ENCODE measurements at regions of chr7 and their contacts with region 1.

Region 1: DNA sequence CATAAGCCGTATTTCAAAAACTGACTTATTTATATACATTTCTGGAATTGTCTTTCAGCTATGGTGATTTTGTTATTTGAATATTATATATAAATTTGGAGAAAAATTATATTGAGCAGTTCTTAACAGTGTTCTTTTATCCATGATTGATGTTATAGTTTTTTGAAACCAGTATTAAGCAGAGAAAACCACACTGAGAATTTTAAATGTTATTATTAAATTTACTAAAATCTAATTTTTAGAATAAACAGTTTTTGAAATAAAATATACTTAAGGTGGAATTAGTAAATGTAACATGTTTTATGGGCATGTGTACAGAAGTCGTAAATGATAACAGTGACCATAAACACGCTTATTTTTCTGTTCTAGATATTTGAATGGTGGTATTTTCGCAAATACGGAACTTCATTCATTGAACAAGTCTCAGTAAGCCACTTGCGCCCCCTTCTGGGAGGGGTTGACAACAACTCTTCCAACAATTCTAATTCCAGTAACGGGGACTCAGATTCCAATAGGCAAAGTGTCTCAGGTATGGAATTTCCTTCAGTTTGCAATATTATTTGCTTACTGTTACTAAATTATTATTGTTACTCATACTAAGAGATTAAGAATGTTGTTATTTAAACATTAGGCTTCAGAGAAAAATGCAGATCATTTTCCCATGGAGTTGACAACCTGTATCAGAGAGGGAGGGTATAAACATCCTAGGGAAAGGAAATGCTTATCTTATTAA is 166.1 kb downstream of the ST7 start:
- DNase-seq: peak; percentile 69
- ATAC-seq: peak; percentile 76
- H3K4me3 ChIP-seq: no peak overlapping the region
- H3K27ac ChIP-seq: no peak overlapping the region
- H3K4me1 ChIP-seq: peaks cover 17% of the 10 kb centered on the region
- H3K27me3 ChIP-seq: no peaks in the 10 kb centered on the region
- CTCF ChIP-seq: peak; percentile 83; the same call in 1 of the 2 replicates

Region 2: DNA sequence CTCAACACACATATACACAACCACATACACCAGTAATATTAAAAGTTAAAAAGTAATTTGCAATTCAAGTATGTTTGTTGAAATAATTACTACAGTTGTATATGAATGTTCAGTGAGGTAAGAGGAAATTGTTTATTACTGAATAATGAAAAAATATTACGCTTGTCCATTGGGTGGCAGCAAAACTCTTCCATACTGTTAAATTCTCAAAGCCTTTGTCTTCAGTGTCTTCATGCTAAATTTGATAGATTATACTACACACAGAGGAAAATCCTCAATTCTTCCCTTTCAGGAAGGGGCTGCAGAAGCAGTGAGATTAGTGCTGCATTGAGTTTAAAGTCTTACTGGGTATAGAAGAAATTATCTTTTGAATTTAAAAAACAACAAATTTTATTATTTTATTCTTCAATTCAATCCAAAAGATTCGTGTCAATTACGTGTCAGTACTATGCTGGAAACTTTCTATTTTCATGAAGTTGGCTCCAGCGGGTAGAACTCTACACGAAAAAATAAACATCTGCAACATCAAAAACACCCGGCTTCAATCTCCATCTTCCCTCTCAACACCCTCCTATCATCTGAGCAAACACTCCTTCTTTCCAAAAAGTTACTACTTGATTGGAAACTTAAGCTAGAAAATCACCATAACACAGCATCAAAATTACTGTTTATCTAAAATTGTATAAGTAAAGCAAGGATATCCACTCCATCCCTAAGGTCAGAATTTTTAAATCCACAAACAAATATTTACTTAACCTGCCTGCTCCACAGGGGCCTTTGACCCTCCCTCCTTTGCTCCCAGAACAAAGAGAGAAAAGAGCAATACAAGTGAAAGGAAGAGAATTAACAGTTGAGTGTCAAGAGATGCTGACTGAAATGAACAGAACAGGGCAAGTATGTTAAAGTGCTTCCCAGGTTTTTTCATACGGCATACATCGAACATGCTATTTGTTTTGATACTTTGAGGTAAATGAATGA is 946.0 kb before region 1 on chr7:
- CTCF ChIA-PET with region 1: no interaction called
- POLR2A ChIA-PET with region 1: no interaction called
- in situ Hi-C with region 1: no loop called
- intact Hi-C with region 1: loop called (anchors 10 kb)
- DNase-seq: peak; percentile 80
- ATAC-seq: peak; percentile 68
- H3K4me3 ChIP-seq: no peak overlapping the region
- H3K27ac ChIP-seq: peak overlapping the region; percentile 73; the same call in 1 of the 2 replicates
- H3K4me1 ChIP-seq: peaks cover 15% of the 10 kb centered on the region
- H3K27me3 ChIP-seq: peaks cover 2% of the 10 kb centered on the region; the same call in 1 of the 2 replicates
- CTCF ChIP-seq: peak; percentile 60; the same call in 1 of the 2 replicates

Region 3: GRCh38 chr7:116511552-116512519 is 607.5 kb before region 1 on chr7:
- CTCF ChIA-PET with region 1: no interaction called
- POLR2A ChIA-PET with region 1: no interaction called
- in situ Hi-C with region 1: no loop called
- intact Hi-C with region 1: no loop called
- DNase-seq: peak; percentile 96
- ATAC-seq: peak; percentile 75
- H3K4me3 ChIP-seq: peak overlapping the region; percentile 39 to 66
- H3K27ac ChIP-seq: peak overlapping the region; percentile 99
- H3K4me1 ChIP-seq: peaks cover 77% of the 10 kb centered on the region
- H3K27me3 ChIP-seq: no peaks in the 10 kb centered on the region
- CTCF ChIP-seq: no peak

Region 4: GRCh38 chr7:116929914-116930913 is 189.1 kb before region 1 on chr7:
- CTCF ChIA-PET with region 1: interaction called, 4 read pairs
- POLR2A ChIA-PET with region 1: interaction called, 6 read pairs
- in situ Hi-C with region 1: no loop called
- intact Hi-C with region 1: loop called (anchors 1 kb)
- DNase-seq: peak; percentile 79
- ATAC-seq: peak; percentile 95
- H3K4me3 ChIP-seq: peak overlapping the region in 1 of 2 experiments; percentile 25; a peak in 1 of 4 replicates
- H3K27ac ChIP-seq: no peak overlapping the region
- H3K4me1 ChIP-seq: 0 out of 2 replicates have a peak, but pooled peaks cover 2% of the 10 kb centered on the region
- H3K27me3 ChIP-seq: no peaks in the 10 kb centered on the region
- CTCF ChIP-seq: peak; percentile 93

Region 5: DNA sequence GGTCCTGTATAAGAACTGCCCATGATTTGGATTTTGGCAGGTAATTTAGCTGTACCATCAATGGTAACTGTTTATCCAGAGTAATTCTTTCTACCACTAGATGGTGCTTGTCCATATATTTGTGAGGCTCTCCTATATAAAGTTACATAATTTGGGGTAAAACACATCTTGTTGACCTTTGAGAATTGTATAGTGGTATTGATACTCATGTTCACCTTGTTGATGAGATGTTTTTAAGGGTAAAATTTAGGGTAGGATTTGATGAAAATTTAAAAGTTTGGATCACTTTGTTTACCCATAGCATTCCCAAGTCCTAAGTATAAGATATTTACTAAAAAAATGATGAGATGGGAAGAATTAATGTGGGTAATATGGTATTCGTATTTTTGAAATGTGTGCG is 134.4 kb before region 1 on chr7:
- CTCF ChIA-PET with region 1: interaction called, 4 read pairs
- POLR2A ChIA-PET with region 1: no interaction called
- in situ Hi-C with region 1: no loop called
- intact Hi-C with region 1: loop called (anchors 1 kb)
- DNase-seq: no peak
- ATAC-seq: peak; percentile 79
- H3K4me3 ChIP-seq: no peak overlapping the region
- H3K27ac ChIP-seq: no peak overlapping the region
- H3K4me1 ChIP-seq: no peaks in the 10 kb centered on the region; the same call in 1 of the 2 replicates
- H3K27me3 ChIP-seq: no peaks in the 10 kb centered on the region
- CTCF ChIP-seq: peak; percentile 77; the same call in 1 of the 2 replicates